ENCODE measurements at regions of chr1 and their contacts with region 1.

Region 1: DNA sequence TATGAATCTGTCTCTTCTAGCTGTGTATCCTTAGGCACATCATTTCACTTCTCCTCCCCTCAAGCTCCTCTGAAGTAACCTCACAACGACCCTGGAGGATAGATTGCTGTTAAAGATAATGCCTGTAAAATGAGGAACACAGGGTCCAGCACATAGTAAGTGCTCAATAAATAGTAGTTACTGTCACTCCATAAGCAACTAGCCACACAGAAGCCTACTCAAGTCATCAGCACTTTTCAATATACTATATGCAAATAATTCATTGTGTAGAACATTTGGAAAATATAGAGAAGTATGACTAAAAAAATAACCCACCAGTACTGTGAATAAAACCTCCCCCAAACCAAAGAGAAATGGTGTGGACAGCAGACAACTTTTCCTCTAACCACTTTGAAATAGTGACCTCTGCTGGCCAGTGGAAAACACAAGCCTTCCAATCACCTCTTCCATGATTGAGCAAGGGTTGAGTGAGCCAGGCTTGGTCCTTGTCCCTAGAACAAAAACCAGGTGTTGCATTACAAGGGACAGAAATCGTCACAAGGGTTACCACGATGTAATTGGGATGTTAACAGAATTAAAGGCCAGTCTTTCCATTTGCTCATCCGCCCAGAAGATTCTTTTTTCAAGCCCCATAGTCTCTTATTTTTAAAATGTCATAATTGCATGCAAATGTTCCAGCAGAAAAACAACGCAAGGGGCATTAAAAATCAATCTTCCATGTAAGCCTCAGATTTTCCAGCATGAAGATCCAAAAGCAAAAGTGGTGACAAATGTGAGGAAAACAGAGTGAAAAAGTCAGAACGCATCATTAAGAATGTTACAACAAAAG is 15.7 kb upstream of the GLIS1 start:
- DNase-seq: peak; percentile 49
- H3K4me3 ChIP-seq: no peak overlapping the region
- H3K27ac ChIP-seq: no peak overlapping the region
- H3K4me1 ChIP-seq: no peaks in the 10 kb centered on the region
- H3K27me3 ChIP-seq: peaks cover 0 to 2% of the 10 kb centered on the region in 2 experiments
- CTCF ChIP-seq: peak; percentile 67 to 73
- POLR2A ChIP-seq: no peak

Region 2: DNA sequence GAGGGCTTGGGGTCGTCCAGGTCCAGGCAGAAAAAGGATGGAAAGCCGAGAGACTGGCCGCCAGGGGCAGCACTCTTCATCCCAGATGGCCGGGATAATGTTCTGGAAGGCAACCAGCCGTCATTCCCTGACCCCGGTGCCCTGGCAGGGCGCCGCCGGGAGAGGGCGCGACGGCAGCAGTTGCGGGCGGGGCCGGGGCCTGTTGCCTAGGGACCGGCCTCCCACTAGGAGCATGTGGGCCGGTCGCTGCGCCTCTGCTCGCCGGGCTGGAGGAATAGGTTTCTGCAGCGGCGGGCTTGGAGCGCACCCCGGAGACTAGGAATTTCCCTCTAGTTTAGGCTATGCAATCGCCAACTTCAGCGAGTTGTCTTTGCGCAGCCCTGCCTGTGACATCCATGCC is 284.5 kb before region 1 on chr1:
- CTCF ChIA-PET with region 1: interaction called, 4 read pairs
- POLR2A ChIA-PET with region 1: no interaction called
- dilution Hi-C with region 1: no loop called
- intact Hi-C with region 1: loop called (anchors 1 kb)
- DNase-seq: peak; percentile 64
- H3K4me3 ChIP-seq: no peak overlapping the region
- H3K27ac ChIP-seq: no peak overlapping the region
- H3K4me1 ChIP-seq: no peaks in the 10 kb centered on the region
- H3K27me3 ChIP-seq: no peaks in the 10 kb centered on the region
- CTCF ChIP-seq: peak; percentile 87 to 92
- POLR2A ChIP-seq: no peak

Region 3: GRCh38 chr1:53715478-53715877 is 39.2 kb before region 1 on chr1:
- CTCF ChIA-PET with region 1: interaction called, 34 read pairs
- POLR2A ChIA-PET with region 1: no interaction called
- dilution Hi-C with region 1: no loop called
- intact Hi-C with region 1: loop called (anchors 1 kb)
- DNase-seq: peak; percentile 30
- H3K4me3 ChIP-seq: no peak overlapping the region
- H3K27ac ChIP-seq: no peak overlapping the region
- H3K4me1 ChIP-seq: no peaks in the 10 kb centered on the region
- H3K27me3 ChIP-seq: peaks cover 0 to 9% of the 10 kb centered on the region in 2 experiments
- CTCF ChIP-seq: peak; percentile 51 to 86
- POLR2A ChIP-seq: no peak

Region 4: GRCh38 chr1:53739109-53739681 is 15.5 kb before region 1 on chr1 and contains the start of gene GLIS1:
- CTCF ChIA-PET with region 1: interaction called, 10 read pairs
- POLR2A ChIA-PET with region 1: no interaction called
- dilution Hi-C with region 1: no loop called
- intact Hi-C with region 1: no loop called
- DNase-seq: peak; percentile 86
- H3K4me3 ChIP-seq: peak within 1 kb of the TSS; percentile 21 to 52 (median 47)
- H3K27ac ChIP-seq: no peak within 1 kb of the TSS
- H3K4me1 ChIP-seq: peaks cover 11% of the 10 kb centered on the region
- H3K27me3 ChIP-seq: peaks cover 40 to 52% of the 10 kb centered on the region in 2 experiments
- CTCF ChIP-seq: no peak
- POLR2A ChIP-seq: no peak
- total RNA-seq, gene GLIS1: not detected in 2 replicates

Region 5: DNA sequence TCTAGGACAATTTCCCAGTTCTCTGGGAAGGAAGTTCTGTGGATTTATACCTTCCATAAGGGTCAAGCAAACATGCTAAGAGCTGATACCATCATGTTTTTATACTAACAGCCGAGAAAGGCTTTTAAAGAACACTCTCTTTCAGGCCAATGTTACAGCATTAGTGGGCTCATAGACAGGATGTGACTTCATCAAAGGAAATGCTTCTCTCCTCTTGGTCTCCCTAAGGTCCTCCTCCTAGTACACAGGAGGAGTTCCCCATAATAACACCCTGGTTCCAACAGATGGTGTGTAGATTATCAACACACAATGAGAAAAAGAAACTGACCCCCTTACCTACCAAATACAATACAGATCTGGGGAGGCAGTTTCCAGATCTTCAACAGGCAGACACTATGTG is 11.0 kb after region 1 on chr1:
- CTCF ChIA-PET with region 1: interaction called, 11 read pairs
- POLR2A ChIA-PET with region 1: no interaction called
- dilution Hi-C with region 1: no loop called
- intact Hi-C with region 1: no loop called
- DNase-seq: peak; percentile 94
- H3K4me3 ChIP-seq: no peak overlapping the region
- H3K27ac ChIP-seq: peak overlapping the region; percentile 77
- H3K4me1 ChIP-seq: peaks cover 28% of the 10 kb centered on the region
- H3K27me3 ChIP-seq: no peaks in the 10 kb centered on the region
- CTCF ChIP-seq: no peak
- POLR2A ChIP-seq: peak; percentile 36

Measured in endothelial cell of umbilical vein (primary cell).